ENCODE measurements at regions of chrX and their contacts with region 1.

Region 1: DNA sequence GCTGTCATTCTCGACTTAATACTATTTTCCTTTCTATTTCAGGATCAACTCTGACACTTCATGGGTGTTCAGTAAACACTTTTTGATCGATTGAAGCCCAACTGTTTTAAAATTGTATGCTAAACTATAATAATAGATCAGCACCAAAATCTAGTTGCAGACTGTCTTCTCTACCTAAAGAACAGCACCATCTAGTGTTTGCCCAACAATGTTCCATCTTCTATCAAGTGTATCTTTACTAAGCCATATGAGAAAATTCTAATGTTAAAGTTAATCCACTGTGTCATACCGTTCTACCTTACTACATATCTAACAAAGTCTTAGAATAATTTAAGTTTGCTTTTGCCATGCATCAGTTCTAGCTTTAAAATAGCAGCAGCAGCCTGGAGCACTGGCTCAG is 113.0 kb upstream of the PRDX4 start:
- DNase-seq: peak; percentile 25
- H3K4me3 ChIP-seq: no peak overlapping the region
- H3K27ac ChIP-seq: no peak overlapping the region
- H3K4me1 ChIP-seq: no peaks in the 10 kb centered on the region
- H3K27me3 ChIP-seq: no peaks in the 10 kb centered on the region
- CTCF ChIP-seq: peak in 1 of 2 donors; percentile 34
- POLR2A ChIP-seq: no peak

Region 2: GRCh38 chrX:23079347-23079746 is 475.0 kb before region 1 on chrX:
- CTCF ChIA-PET with region 1: no interaction called
- POLR2A ChIA-PET with region 1: no interaction called
- dilution Hi-C with region 1: no loop called
- intact Hi-C with region 1: no loop called
- DNase-seq: no peak
- H3K4me3 ChIP-seq: no peak overlapping the region
- H3K27ac ChIP-seq: no peak overlapping the region
- H3K4me1 ChIP-seq: no peaks in the 10 kb centered on the region
- H3K27me3 ChIP-seq: no peaks in the 10 kb centered on the region
- CTCF ChIP-seq: no peak
- POLR2A ChIP-seq: no peak

Region 3: GRCh38 chrX:23403853-23404252 is 150.5 kb before region 1 on chrX:
- CTCF ChIA-PET with region 1: no interaction called
- POLR2A ChIA-PET with region 1: no interaction called
- dilution Hi-C with region 1: no loop called
- intact Hi-C with region 1: loop called (anchors 10 kb)
- DNase-seq: no peak
- H3K4me3 ChIP-seq: no peak overlapping the region
- H3K27ac ChIP-seq: no peak overlapping the region
- H3K4me1 ChIP-seq: no peaks in the 10 kb centered on the region
- H3K27me3 ChIP-seq: no peaks in the 10 kb centered on the region
- CTCF ChIP-seq: no peak
- POLR2A ChIP-seq: no peak

Region 4: DNA sequence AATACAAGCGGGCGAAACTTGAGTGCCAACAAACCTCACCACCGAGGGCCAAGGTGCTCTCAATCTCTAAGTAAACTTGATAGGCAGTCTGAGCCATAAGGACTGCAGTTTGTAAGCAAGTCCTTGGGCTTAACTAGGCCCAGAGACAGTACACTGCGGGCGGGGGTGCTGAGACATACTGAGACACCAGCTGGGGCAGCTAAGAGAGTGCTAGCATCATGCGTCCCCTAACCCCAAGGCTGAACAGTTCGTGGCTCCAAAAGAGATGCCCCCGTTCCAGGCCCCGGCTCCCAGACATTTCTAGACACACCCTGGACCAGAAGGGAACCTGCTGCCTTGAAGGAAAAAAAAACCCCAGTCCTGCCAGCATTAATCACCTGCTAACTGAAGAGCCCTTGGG is 13.8 kb before region 1 on chrX:
- CTCF ChIA-PET with region 1: no interaction called
- POLR2A ChIA-PET with region 1: no interaction called
- dilution Hi-C with region 1: no loop called
- intact Hi-C with region 1: no loop called
- DNase-seq: no peak
- H3K4me3 ChIP-seq: no peak overlapping the region
- H3K27ac ChIP-seq: no peak overlapping the region
- H3K4me1 ChIP-seq: no peaks in the 10 kb centered on the region
- H3K27me3 ChIP-seq: no peaks in the 10 kb centered on the region
- CTCF ChIP-seq: no peak
- POLR2A ChIP-seq: no peak